A673 (cell line): ENCODE measurements at regions of chr22 and their contacts with region 1.

Region 1: DNA sequence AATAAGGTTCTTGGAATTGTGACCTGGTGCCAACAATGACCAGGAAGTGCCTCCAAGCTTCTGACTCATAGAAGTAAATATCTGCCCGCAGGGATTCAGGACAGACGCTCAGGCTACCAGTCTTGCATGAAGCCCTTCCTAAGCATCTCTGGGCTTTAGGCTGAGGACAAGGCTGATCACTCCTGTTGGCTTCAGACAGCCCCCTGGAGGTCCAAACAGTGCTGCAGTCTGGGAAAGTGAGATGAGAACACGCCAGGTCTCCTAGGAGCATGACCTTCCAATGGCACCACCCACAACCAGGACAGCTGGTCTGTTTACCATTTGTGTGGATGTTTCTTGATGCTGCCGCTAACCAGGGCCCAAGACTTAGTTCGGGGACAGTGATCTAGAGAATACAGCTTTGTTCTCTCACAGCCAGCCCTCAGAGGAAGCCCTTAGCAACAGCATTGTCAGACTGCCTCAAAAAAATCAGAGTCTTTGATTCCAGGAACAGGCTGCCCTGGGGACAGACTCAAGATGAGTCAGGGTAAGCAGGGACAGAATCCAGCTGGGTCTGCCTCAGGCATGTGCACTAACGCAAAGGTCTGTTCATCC is 111.2 kb downstream of the ZNF280B start:
- DNase-seq: no peak
- H3K4me3 ChIP-seq: no peak overlapping the region
- H3K27ac ChIP-seq: no peak overlapping the region
- H3K4me1 ChIP-seq: no peaks in the 10 kb centered on the region
- H3K27me3 ChIP-seq: peaks cover 23% of the 10 kb centered on the region
- CTCF ChIP-seq: no peak

Region 2: DNA sequence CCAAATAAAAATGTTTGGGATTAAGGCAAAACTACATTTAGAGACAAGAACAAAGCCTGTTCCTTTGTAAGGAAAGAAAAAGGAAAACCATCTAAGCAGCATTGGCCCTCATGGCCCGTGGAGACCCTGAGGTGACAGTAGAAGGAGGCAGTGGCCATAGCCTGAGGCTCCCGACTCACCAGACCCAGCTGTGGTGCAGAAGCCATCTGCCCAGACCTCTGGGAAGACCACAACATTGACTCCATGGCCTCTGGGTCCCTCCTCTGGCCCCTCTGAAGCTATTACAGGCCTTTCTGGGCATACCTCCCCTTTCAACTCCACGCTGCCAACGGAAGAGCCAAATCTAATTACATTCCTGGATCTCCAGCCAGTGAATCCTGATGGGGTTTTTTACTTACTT is 155.3 kb after region 1 on chr22:
- CTCF ChIA-PET with region 1: no interaction called
- POLR2A ChIA-PET with region 1: no interaction called
- intact Hi-C with region 1: no loop called
- DNase-seq: no peak
- H3K4me3 ChIP-seq: no peak overlapping the region
- H3K27ac ChIP-seq: no peak overlapping the region
- H3K4me1 ChIP-seq: no peaks in the 10 kb centered on the region
- H3K27me3 ChIP-seq: no peaks in the 10 kb centered on the region
- CTCF ChIP-seq: no peak

Region 3: GRCh38 chr22:22746963-22747933 is 349.9 kb after region 1 on chr22:
- CTCF ChIA-PET with region 1: interaction called, 11 read pairs
- POLR2A ChIA-PET with region 1: no interaction called
- intact Hi-C with region 1: no loop called
- DNase-seq: no peak
- H3K4me3 ChIP-seq: no peak overlapping the region
- H3K27ac ChIP-seq: no peak overlapping the region
- H3K4me1 ChIP-seq: no peaks in the 10 kb centered on the region
- H3K27me3 ChIP-seq: peaks cover 8% of the 10 kb centered on the region
- CTCF ChIP-seq: no peak

Region 4: GRCh38 chr22:23060612-23061400 is 663.4 kb after region 1 on chr22:
- CTCF ChIA-PET with region 1: no interaction called
- POLR2A ChIA-PET with region 1: interaction called, 10 read pairs
- intact Hi-C with region 1: no loop called
- DNase-seq: no peak
- H3K4me3 ChIP-seq: no peak overlapping the region
- H3K27ac ChIP-seq: no peak overlapping the region
- H3K4me1 ChIP-seq: no peaks in the 10 kb centered on the region
- H3K27me3 ChIP-seq: no peaks in the 10 kb centered on the region
- CTCF ChIP-seq: no peak